GM13976 (cell line): ENCODE measurements at regions of chr5 and their contacts with region 1.

Region 1: GRCh38 chr5:35926389-35927051 is 11.9 kb downstream of the CAPSL start:
- DNase-seq: peak; percentile 67
- CTCF ChIP-seq: peak; percentile 83

Region 2: GRCh38 chr5:35651002-35651756 is 275.3 kb before region 1 on chr5:
- in situ Hi-C with region 1: loop called (anchors 5 kb)
- DNase-seq: peak; percentile 33
- CTCF ChIP-seq: peak; percentile 30

Region 3: GRCh38 chr5:35741126-35741716 is 185.3 kb before region 1 on chr5:
- in situ Hi-C with region 1: no loop called
- DNase-seq: no peak
- CTCF ChIP-seq: no peak

Region 4: DNA sequence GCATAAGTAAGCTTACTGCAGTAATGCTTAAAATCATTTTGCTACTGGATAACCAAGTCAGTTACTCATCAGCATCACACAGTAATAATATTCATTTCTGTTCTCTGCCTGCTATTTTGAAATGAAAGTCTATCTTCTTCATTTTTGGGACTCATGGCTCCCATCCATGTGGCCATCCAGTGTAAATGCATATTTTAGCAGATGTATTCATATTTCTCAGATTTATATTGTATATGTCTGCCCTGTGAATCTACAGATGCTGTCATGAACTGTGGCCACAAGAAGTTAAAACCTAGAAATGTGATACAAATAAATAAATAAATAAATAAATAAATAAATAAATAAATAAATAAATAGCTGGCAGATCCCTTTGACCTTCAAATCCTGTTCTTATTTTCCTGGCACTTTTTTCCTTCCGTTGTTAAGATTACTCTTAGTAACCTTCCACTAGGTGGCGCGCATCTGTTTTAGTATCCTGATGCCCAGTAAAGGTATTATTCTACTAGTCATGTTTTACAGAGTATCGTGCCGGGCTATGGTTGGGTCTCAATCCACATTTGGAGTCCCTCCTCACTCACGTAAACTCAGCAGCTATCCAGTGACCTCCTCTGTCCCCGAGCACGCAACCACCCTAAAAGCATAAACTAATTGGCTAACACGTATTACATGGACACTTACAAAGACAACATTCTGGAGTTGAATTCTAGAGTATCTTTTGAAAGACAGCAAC is 149.0 kb before region 1 on chr5:
- in situ Hi-C with region 1: loop called (anchors 10 kb)
- DNase-seq: peak; percentile 38
- CTCF ChIP-seq: peak; percentile 42